Endothelial cell of umbilical vein (primary cell): ENCODE measurements at regions of chr10 and their contacts with region 1.

Region 1: DNA sequence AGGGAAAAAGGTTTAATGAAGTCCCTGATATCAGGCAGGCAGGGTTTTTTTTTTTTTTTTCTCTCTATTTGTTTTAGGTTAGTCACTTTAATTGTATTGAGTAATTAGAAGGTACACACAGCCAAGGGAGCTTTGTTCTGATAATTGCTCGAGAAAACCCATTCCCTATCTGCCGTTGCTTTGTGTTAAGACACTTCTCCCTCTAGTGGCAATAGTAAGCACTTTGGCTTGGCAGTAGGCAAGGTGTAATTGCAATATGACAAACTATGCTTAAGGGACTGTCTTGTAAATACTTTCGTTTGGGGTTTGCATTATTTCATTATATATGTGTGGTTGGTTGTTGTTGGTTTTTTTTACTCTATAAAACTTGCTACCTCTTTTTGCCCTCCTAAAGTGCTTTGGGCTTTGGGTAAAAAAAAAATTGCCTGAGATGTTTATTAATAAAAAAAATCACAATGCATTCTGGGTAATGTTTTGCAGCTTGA is 113.4 kb downstream of the BTRC start:
- DNase-seq: peak; percentile 84
- H3K4me3 ChIP-seq: no peak overlapping the region
- H3K27ac ChIP-seq: no peak overlapping the region
- H3K4me1 ChIP-seq: no peaks in the 10 kb centered on the region
- H3K27me3 ChIP-seq: no peaks in the 10 kb centered on the region
- CTCF ChIP-seq: peak; percentile 67 to 75
- POLR2A ChIP-seq: no peak

Region 2: GRCh38 chr10:101272229-101272868 is 195.0 kb before region 1 on chr10:
- CTCF ChIA-PET with region 1: interaction called, 52 read pairs
- POLR2A ChIA-PET with region 1: no interaction called
- dilution Hi-C with region 1: no loop called
- intact Hi-C with region 1: no loop called
- DNase-seq: peak; percentile 70
- H3K4me3 ChIP-seq: no peak overlapping the region
- H3K27ac ChIP-seq: no peak overlapping the region
- H3K4me1 ChIP-seq: no peaks in the 10 kb centered on the region
- H3K27me3 ChIP-seq: peaks cover 3 to 8% of the 10 kb centered on the region in 2 experiments
- CTCF ChIP-seq: peak; percentile 77 to 89
- POLR2A ChIP-seq: no peak

Region 3: GRCh38 chr10:101311185-101312066 is 155.9 kb before region 1 on chr10:
- CTCF ChIA-PET with region 1: interaction called, 23 read pairs
- POLR2A ChIA-PET with region 1: no interaction called
- dilution Hi-C with region 1: no loop called
- intact Hi-C with region 1: no loop called
- DNase-seq: no peak
- H3K4me3 ChIP-seq: no peak overlapping the region
- H3K27ac ChIP-seq: no peak overlapping the region
- H3K4me1 ChIP-seq: no peaks in the 10 kb centered on the region
- H3K27me3 ChIP-seq: peaks cover 35 to 46% of the 10 kb centered on the region in 2 experiments
- CTCF ChIP-seq: no peak
- POLR2A ChIP-seq: no peak

Region 4: DNA sequence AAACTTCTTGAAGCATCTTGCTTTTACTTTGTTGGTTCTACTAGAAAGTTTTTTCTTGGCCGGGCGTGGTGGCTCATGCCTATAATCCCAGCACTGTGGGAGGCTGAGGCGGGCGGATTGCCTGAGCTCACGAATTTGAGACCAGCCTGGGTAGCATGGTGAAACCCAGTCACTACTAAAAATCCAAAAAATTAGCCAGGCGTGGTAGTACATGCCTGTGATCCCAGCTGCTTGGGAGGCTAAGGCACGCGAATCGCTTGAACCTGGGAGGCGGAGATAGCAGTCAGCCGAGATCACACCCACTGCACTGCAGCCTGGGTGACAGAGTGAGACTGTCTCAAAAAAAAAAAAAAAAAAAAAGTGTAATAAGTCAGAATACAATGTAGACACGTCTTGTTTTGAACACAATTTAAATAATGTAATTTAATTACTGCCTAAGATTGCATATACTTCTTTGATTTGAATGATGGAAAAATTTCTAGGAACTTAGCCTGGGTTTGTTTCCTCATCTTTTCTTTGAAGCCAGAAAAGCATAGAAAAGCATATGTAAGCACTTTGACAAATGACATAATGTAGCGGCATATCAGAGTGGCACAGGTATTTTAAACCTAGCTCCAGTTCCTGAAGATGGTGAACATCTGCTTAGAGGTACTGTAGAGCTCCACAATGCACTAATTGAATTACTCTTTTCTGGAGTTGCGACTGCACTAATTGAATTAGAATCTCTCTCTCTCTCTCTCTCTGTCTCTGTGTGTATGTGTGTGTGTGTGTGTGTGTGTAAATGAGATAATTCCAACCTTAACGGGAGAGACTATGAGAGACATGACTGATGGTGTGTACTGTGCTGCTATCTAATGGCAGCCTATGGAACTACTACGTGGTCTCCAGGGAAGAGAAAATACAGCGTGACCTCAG is 25.5 kb before region 1 on chr10:
- CTCF ChIA-PET with region 1: interaction called, 114 read pairs
- POLR2A ChIA-PET with region 1: no interaction called
- dilution Hi-C with region 1: no loop called
- intact Hi-C with region 1: no loop called
- DNase-seq: peak; percentile 70
- H3K4me3 ChIP-seq: no peak overlapping the region
- H3K27ac ChIP-seq: no peak overlapping the region
- H3K4me1 ChIP-seq: no peaks in the 10 kb centered on the region
- H3K27me3 ChIP-seq: no peaks in the 10 kb centered on the region
- CTCF ChIP-seq: peak; percentile 51 to 61
- POLR2A ChIP-seq: no peak

Region 5: GRCh38 chr10:101485681-101486554 is 18.6 kb after region 1 on chr10:
- CTCF ChIA-PET with region 1: interaction called, 56 read pairs
- POLR2A ChIA-PET with region 1: interaction called, 6 read pairs
- dilution Hi-C with region 1: no loop called
- intact Hi-C with region 1: no loop called
- DNase-seq: no peak
- H3K4me3 ChIP-seq: no peak overlapping the region
- H3K27ac ChIP-seq: no peak overlapping the region
- H3K4me1 ChIP-seq: no peaks in the 10 kb centered on the region
- H3K27me3 ChIP-seq: no peaks in the 10 kb centered on the region
- CTCF ChIP-seq: no peak
- POLR2A ChIP-seq: no peak

Region 6: DNA sequence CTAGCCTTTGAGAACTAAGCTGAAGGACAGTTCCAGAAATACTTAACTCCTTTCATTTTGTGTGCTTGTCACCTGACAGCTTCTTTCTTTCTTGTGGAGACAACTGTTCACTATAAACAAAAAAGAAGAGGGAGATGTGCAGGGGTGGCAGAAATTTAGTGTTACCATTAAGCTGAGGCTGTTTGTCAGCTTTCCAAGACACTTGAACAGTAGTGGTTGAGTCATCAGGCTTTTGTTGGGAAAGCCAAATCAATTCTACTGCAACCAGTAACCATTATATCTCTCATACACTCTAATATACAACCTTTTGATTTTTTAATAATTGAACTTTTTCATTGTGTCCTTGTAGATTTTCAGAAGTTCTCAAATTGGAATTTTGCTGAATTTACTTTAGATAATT is 45.4 kb after region 1 on chr10:
- CTCF ChIA-PET with region 1: interaction called, 13 read pairs
- POLR2A ChIA-PET with region 1: no interaction called
- dilution Hi-C with region 1: no loop called
- intact Hi-C with region 1: no loop called
- DNase-seq: no peak
- H3K4me3 ChIP-seq: no peak overlapping the region
- H3K27ac ChIP-seq: no peak overlapping the region
- H3K4me1 ChIP-seq: no peaks in the 10 kb centered on the region
- H3K27me3 ChIP-seq: no peaks in the 10 kb centered on the region
- CTCF ChIP-seq: no peak
- POLR2A ChIP-seq: no peak

Region 7: DNA sequence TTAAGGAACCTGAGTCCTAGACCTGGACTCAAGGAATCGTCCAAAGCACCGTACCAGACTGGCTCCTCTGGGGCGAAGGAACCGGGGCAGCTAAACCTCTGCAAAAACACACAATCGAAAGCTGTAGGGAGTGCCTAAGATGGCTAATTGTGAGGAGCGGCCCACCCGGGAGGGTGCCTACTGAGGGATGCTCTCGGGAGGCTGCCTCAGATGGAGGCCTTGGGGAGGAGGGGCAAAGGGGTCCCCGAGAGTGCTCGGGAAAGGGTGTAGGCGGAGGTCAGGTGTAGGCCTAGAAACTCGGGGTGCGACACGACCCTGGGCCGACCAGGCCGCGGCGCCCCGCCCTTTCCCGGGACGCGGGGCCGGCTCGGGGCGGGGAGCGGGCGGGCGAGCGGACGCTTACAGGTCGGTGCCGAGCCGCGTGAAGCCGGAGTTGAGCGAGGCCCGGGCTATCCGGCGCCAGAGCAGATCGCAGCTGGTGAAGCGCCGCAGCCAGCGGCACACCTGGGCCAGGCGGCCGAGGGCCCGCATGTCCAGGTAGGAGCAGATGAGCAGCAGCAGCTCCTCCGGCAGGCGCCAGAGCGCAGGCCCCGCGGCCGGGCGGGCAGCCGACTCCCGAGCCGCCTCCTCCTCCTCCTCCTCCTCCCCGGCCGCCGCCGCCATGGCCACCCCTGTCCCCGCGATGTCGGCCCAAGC is 226.8 kb after region 1 on chr10:
- CTCF ChIA-PET with region 1: no interaction called
- POLR2A ChIA-PET with region 1: no interaction called
- dilution Hi-C with region 1: no loop called
- intact Hi-C with region 1: no loop called
- DNase-seq: peak; percentile 68
- H3K4me3 ChIP-seq: peak overlapping the region; percentile 52 to 95 (median 77)
- H3K27ac ChIP-seq: peak overlapping the region; percentile 82
- H3K4me1 ChIP-seq: peaks cover 14% of the 10 kb centered on the region
- H3K27me3 ChIP-seq: no peaks in the 10 kb centered on the region
- CTCF ChIP-seq: no peak
- POLR2A ChIP-seq: peak; percentile 87